PC-9 (cell line): ENCODE measurements at regions of chr9 and their contacts with region 1.

Region 1: GRCh38 chr9:128339771-128340690 is at the start of gene SLC27A4:
- DNase-seq: peak; percentile 79 to 92
- H3K4me3 ChIP-seq: peak within 1 kb of the TSS; percentile 85
- H3K27ac ChIP-seq: peak within 1 kb of the TSS; percentile 68
- H3K4me1 ChIP-seq: peaks cover 9% of the 10 kb centered on the region; the same call in 1 of the 2 replicates
- H3K27me3 ChIP-seq: no peaks in the 10 kb centered on the region
- CTCF ChIP-seq: no peak
- total RNA-seq, gene SLC27A4: 27.3 and 30.4 TPM in 2 replicates

Region 2: GRCh38 chr9:128094166-128094967 is 245.7 kb before region 1 on chr9:
- CTCF ChIA-PET with region 1: interaction called, 11 read pairs
- POLR2A ChIA-PET with region 1: no interaction called
- intact Hi-C with region 1: no loop called
- DNase-seq: peak; percentile 96 to 98
- H3K4me3 ChIP-seq: peak overlapping the region; percentile 10; the same call in 1 of the 2 replicates
- H3K27ac ChIP-seq: peak overlapping the region; percentile 81
- H3K4me1 ChIP-seq: peaks cover 31% of the 10 kb centered on the region
- H3K27me3 ChIP-seq: no peaks in the 10 kb centered on the region
- CTCF ChIP-seq: no peak

Region 3: DNA sequence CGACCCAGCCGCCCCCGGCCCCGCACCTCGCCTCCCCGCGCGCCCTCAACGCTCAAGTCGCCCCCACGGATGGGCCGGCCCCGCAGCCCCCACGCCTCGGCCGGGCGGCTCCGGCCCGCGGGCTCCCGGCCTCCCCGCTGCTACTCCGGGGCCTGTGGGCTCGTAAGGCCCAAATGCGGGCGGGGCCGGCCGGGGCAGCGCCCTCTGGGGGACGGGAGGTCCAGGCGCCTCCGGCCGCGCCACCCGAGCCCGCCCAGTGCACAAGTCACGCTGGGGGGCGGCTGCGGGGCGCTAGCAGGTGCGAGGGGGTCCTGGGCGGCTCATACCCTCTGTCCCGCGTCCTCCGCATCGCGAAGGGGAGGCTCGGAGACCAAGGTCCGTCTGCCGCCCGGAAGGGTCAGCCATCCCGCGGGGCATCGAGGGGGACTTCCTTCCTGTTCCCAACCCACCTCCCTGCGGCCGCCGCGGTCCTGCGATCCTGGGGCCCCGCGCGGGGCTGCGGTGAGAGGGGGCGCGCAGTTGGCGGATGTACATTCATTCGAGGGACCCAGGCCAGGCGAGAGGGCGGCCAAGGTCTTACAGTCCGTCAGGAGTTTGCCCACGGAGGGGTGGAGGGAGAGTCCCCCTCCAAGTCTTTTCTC is 148.5 kb before region 1 on chr9 and contains the start of gene CIZ1:
- CTCF ChIA-PET with region 1: no interaction called
- POLR2A ChIA-PET with region 1: interaction called, 3 read pairs
- intact Hi-C with region 1: loop called (anchors 5 kb)
- DNase-seq: peak; percentile 46 to 83
- H3K4me3 ChIP-seq: peak within 1 kb of the TSS; percentile 83
- H3K27ac ChIP-seq: peak within 1 kb of the TSS; percentile 77
- H3K4me1 ChIP-seq: peaks cover 16% of the 10 kb centered on the region
- H3K27me3 ChIP-seq: no peaks in the 10 kb centered on the region
- CTCF ChIP-seq: peak; percentile 65
- total RNA-seq, gene CIZ1: 164 and 213 TPM in 2 replicates

Region 4: GRCh38 chr9:128275996-128276573 is 63.9 kb before region 1 on chr9 and contains the starts of genes GOLGA2 and SWI5:
- CTCF ChIA-PET with region 1: no interaction called
- POLR2A ChIA-PET with region 1: interaction called, 3 read pairs
- intact Hi-C with region 1: loop called (anchors 5 kb)
- DNase-seq: peak; percentile 95 to 100
- H3K4me3 ChIP-seq: peak within 1 kb of the TSS; percentile 65
- H3K27ac ChIP-seq: peak within 1 kb of the TSS; percentile 51; the same call in 1 of the 2 replicates
- H3K4me1 ChIP-seq: peaks cover 36% of the 10 kb centered on the region
- H3K27me3 ChIP-seq: no peaks in the 10 kb centered on the region
- CTCF ChIP-seq: no peak
- total RNA-seq, gene GOLGA2: 175 and 188 TPM in 2 replicates
- total RNA-seq, gene SWI5: 70.4 and 86.0 TPM in 2 replicates

Region 5: DNA sequence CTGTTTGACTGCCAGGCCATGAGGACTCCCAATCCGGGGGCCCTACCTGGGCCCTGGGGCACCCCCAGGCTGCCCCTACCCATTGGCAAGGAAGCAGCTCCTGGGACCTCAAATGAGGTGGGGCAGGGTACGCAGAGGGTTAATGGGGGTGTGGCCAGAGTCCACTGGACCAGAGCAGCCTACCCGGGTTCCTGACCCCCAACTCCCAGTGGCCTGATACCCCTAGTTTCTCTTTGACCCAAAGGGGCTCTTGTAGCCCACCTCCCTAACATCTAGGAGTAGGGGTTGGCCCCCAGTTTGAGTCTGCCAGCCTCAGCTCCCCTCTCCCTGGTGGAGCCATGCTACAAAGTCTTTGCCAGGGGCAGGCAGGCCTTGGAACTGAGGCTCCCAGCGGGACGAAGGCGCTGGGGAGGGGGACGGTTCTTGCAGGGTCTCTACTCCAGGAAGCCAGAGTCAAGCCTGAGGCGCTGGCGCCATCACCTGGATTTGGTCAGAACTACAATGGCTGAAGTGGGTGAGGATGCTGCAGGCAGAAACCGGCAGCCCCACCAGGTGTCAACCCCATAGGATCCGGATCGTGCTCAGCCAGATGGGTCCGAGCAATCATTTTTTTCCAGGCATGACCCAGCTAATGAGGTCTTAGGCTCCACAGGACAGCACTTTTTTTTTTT is 72.2 kb after region 1 on chr9:
- CTCF ChIA-PET with region 1: interaction called, 3 read pairs
- POLR2A ChIA-PET with region 1: no interaction called
- intact Hi-C with region 1: loop called (anchors 5 kb)
- DNase-seq: peak in 1 of 2 experiments; percentile 65
- H3K4me3 ChIP-seq: no peak overlapping the region
- H3K27ac ChIP-seq: no peak overlapping the region
- H3K4me1 ChIP-seq: peaks cover 15% of the 10 kb centered on the region
- H3K27me3 ChIP-seq: no peaks in the 10 kb centered on the region
- CTCF ChIP-seq: peak; percentile 71